ENCODE measurements at regions of chr7 and their contacts with region 1.

Region 1: GRCh38 chr7:130010689-130011412 is 40.3 kb downstream of the ZC3HC1 start:
- H3K4me3 Mint-ChIP-seq: no peak overlapping the region
- H3K27ac Mint-ChIP-seq: no peak overlapping the region
- H3K4me1 Mint-ChIP-seq: peaks cover 13% of the 10 kb centered on the region
- H3K27me3 Mint-ChIP-seq: peaks cover 1% of the 10 kb centered on the region

Region 2: DNA sequence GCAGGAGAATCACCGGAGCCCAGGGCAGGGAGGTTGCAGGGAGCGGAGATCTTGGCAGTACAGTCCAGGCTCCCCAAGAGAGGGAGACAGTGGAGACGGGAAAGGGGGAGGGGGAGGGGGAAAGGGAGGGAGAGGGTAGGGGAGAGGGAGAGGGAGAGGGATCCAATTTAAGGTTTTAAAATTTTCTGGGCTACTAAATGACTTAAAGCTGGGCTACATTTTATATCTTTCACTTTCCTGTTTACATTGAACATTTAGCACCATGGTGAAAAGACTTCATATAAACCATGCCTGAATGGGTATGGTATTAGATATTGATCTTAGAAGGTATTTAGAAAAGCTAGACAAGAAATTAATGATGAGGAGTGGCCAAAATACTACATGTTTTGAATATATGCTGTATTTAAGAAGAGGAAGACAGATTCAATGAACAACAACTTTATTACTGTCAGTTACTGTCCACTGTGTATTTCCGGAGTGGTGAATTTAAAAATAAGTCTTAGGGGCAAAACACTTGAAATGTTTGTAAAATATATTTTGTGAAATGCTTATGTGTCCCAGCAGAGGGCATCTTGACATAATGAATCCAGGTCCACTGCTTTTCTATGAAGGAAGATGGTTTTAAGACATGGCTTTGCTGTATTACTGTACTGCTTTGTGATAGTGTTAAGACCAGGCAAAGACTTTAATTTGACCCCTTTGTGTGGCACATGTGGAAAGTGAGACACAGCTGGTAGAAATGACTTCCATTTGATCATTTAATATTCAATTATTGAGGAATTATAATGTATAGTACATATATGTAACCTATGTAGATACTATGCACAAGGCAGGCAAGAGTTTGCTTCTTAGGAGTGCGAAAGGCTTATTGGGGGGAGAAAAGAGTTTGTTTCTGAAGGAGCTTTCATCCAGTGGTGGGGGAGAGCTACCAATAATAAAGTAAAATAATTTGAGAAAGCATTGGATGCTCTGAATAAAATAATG is 346.5 kb before region 1 on chr7:
- intact Hi-C with region 1: loop called (anchors 5 kb)
- H3K4me3 Mint-ChIP-seq: no peak overlapping the region
- H3K27ac Mint-ChIP-seq: no peak overlapping the region
- H3K4me1 Mint-ChIP-seq: peaks cover 14% of the 10 kb centered on the region
- H3K27me3 Mint-ChIP-seq: no peaks in the 10 kb centered on the region

Region 3: DNA sequence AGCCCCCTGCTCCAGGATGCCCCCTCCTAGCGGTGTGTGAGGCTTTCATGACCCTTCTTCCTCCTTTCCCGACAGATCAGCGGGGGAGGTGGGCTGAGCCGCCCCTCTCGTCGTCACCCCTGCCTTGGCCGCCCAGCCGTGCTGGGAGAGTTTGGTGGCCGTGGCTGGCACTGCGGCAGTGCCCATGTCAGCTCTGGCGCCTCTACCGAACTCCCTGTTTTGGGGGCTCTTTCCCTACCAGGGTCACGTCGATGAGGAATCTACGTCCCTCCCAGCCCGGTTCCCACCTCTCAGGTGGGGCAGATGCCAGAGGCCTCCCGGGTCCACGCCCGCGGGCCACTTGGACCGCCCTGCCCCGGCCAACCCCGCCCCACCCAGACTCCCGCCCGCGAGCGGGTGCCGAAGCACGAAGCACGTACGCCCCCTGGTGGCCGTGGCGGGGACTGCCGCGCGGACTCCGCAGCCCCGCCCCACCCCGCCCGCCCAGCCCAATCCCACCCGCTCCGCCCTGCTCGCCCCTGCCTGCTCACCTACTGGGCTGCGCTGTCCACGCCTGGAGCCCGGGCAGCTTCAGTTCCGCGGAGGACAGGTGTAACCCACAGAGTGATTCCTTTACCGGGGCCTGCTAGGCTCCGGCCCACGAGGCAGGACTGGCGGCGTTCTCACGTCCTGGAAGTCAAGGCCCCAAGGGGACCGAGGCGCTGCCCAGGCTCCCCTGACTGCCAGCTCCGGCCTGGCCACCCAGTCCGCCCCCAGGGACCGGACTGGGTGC is 185.2 kb before region 1 on chr7:
- intact Hi-C with region 1: loop called (anchors 1 kb)
- H3K4me3 Mint-ChIP-seq: peak overlapping the region; percentile 92
- H3K27ac Mint-ChIP-seq: peak overlapping the region; percentile 52
- H3K4me1 Mint-ChIP-seq: peaks cover 23% of the 10 kb centered on the region
- H3K27me3 Mint-ChIP-seq: peaks cover 22% of the 10 kb centered on the region

Region 4: GRCh38 chr7:129989466-129989865 is 21.4 kb before region 1 on chr7:
- intact Hi-C with region 1: no loop called
- H3K4me3 Mint-ChIP-seq: no peak overlapping the region
- H3K27ac Mint-ChIP-seq: no peak overlapping the region
- H3K4me1 Mint-ChIP-seq: no peaks in the 10 kb centered on the region
- H3K27me3 Mint-ChIP-seq: peaks cover 1% of the 10 kb centered on the region

Region 5: DNA sequence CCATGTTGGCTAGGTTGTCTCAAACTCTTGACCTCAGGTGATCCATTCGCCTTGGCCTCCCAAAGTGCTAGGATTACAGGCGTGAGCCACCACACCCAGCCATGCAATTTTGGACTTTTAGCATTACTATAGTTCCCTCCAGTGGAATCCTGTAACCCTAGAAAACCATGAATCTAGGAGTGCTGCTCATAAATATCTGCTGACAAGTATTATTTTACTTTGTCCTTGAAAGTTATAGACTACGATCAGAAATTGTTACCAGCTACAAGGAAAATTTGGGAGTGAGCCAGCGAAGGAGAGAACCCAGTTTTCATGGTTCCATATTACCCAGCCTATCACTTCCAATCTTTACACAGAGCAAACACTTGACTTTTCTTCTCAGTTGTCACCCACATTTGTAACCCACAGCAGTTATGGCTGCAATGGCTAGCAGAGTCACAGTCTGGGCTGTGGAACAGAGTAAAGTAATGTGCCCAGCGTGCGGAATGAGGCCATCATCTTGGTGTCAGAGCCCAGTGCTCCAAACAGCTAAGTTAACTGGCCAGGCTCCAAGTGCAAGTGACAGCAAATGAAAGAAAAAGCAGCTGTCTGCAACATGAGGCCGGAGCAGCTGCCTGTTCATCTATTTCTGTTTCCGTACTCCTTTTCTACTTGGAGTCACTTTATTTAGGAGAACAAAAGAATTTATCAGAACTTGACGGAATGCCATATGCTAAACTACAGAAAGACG is 10.4 kb after region 1 on chr7:
- intact Hi-C with region 1: no loop called
- H3K4me3 Mint-ChIP-seq: no peak overlapping the region
- H3K27ac Mint-ChIP-seq: no peak overlapping the region
- H3K4me1 Mint-ChIP-seq: peaks cover 6% of the 10 kb centered on the region
- H3K27me3 Mint-ChIP-seq: no peaks in the 10 kb centered on the region

Measured in dendritic cell treated with granulocyte-macrophage colony-stimulating factor and Interleukin-4, amounts not matched to agents 40 ng/mL and 50 ng/mL, for 4 days (primary cell).